B cell (primary cell): ENCODE measurements at regions of chr13 and their contacts with region 1.

Region 1: GRCh38 chr13:78978381-78978998 is 319.5 kb upstream of the OBI1 start:
- DNase-seq: peak; percentile 55
- ATAC-seq: peak; percentile 81
- H3K4me3 ChIP-seq: no peak overlapping the region
- H3K4me3 Mint-ChIP-seq: no peak overlapping the region
- H3K27ac ChIP-seq: no peak overlapping the region
- H3K27ac Mint-ChIP-seq: no peak overlapping the region
- H3K4me1 ChIP-seq: no peaks in the 10 kb centered on the region
- H3K4me1 Mint-ChIP-seq: peaks cover 3% of the 10 kb centered on the region
- H3K27me3 ChIP-seq: peaks cover 0 to 1% (median 0%) of the 10 kb centered on the region in 4 experiments
- H3K27me3 Mint-ChIP-seq: peaks cover 25% of the 10 kb centered on the region
- CTCF ChIP-seq: peak; percentile 87

Region 2: GRCh38 chr13:78131811-78132210 is 846.7 kb before region 1 on chr13:
- CTCF ChIA-PET with region 1: interaction called, 74 read pairs
- POLR2A ChIA-PET with region 1: no interaction called
- intact Hi-C with region 1: no loop called
- DNase-seq: no peak
- ATAC-seq: no peak
- H3K4me3 ChIP-seq: no peak overlapping the region
- H3K4me3 Mint-ChIP-seq: no peak overlapping the region
- H3K27ac ChIP-seq: no peak overlapping the region
- H3K27ac Mint-ChIP-seq: no peak overlapping the region
- H3K4me1 ChIP-seq: no peaks in the 10 kb centered on the region
- H3K4me1 Mint-ChIP-seq: no peaks in the 10 kb centered on the region
- H3K27me3 ChIP-seq: peaks cover 0 to 6% (median 0%) of the 10 kb centered on the region in 4 experiments
- H3K27me3 Mint-ChIP-seq: peaks cover 13% of the 10 kb centered on the region
- CTCF ChIP-seq: no peak

Region 3: DNA sequence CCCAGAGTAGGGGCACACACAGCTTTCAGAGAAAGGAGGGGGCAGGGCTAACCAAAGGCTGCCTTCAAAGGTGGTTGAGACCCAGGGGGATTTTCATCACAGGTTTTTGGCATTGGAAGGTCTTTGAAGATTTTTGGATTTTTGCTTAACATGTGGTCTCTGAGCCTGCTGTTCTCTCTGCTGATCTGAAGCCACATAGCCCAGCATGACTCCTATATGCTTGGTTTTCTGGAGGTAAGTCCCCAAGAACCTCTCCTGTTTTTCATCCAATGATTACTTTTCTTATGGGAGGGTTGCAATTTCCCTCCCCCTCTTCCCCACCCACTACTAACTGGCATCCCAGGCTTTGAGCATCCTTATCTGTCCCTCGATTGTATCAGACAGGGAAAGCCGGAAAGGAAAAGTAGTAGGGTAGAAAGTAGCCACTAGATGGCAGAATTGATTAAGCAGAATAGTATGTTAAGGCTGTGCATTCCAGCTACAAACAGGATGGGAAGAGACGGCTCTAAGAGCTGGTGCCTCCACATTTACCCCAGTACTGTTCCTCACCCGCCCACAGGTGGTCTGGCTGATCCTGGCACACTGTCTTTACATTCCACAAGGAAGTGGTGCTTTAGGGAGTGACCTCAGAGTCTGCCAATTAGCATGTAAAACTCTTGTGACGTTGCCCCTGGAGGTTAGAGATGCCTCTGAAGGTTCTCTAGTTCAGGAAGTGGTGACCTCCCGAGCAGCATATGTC is 840.9 kb before region 1 on chr13:
- CTCF ChIA-PET with region 1: interaction called, 74 read pairs
- POLR2A ChIA-PET with region 1: no interaction called
- intact Hi-C with region 1: no loop called
- DNase-seq: peak; percentile 65
- ATAC-seq: peak; percentile 71
- H3K4me3 ChIP-seq: peak overlapping the region in 4 of 5 experiments; percentile 23 to 48 (median 33)
- H3K4me3 Mint-ChIP-seq: peak overlapping the region; percentile 83
- H3K27ac ChIP-seq: no peak overlapping the region
- H3K27ac Mint-ChIP-seq: no peak overlapping the region
- H3K4me1 ChIP-seq: peaks cover 7% of the 10 kb centered on the region in 2 donors
- H3K4me1 Mint-ChIP-seq: peaks cover 5% of the 10 kb centered on the region
- H3K27me3 ChIP-seq: no peaks in the 10 kb centered on the region
- H3K27me3 Mint-ChIP-seq: no peaks in the 10 kb centered on the region
- CTCF ChIP-seq: peak; percentile 78

Region 4: DNA sequence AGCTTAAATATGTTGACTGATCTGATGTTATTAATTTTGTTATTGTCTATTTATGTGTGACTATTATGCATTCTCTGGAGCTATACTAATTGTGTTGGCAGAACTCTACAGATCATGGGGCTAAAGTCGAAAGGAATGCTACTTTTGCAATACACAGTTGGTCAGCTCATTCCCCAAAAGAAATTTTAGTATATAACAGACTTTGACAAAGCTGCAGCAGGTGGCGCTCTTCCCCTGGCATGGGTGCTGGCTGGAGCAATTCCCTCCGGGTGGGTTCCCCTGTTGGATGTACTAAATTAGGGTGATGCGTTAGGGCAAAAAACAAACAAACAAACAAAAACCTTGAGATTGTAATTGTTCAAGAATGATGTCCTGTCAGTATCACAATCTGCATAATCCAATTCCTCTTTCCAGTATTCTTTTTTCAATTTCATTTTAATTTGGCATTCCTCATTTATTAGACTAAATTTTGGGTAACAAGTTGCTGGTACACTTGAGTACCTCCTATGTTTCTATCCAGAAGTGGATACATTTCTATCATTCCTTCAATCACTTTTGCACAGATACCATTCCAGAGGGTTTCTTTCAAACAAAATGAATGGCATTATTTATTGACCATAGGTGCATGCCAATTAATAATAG is 737.1 kb before region 1 on chr13:
- CTCF ChIA-PET with region 1: interaction called, 4 read pairs
- POLR2A ChIA-PET with region 1: no interaction called
- intact Hi-C with region 1: loop called (anchors 2 kb)
- DNase-seq: peak; percentile 6
- ATAC-seq: no peak
- H3K4me3 ChIP-seq: no peak overlapping the region
- H3K4me3 Mint-ChIP-seq: no peak overlapping the region
- H3K27ac ChIP-seq: no peak overlapping the region
- H3K27ac Mint-ChIP-seq: no peak overlapping the region
- H3K4me1 ChIP-seq: no peaks in the 10 kb centered on the region
- H3K4me1 Mint-ChIP-seq: no peaks in the 10 kb centered on the region
- H3K27me3 ChIP-seq: no peaks in the 10 kb centered on the region
- H3K27me3 Mint-ChIP-seq: no peaks in the 10 kb centered on the region
- CTCF ChIP-seq: peak; percentile 39

Region 5: GRCh38 chr13:79070343-79070974 is 92.0 kb after region 1 on chr13:
- CTCF ChIA-PET with region 1: no interaction called
- POLR2A ChIA-PET with region 1: no interaction called
- intact Hi-C with region 1: no loop called
- DNase-seq: peak; percentile 20
- ATAC-seq: no peak
- H3K4me3 ChIP-seq: no peak overlapping the region
- H3K4me3 Mint-ChIP-seq: peak overlapping the region; percentile 14
- H3K27ac ChIP-seq: no peak overlapping the region
- H3K27ac Mint-ChIP-seq: no peak overlapping the region
- H3K4me1 ChIP-seq: peaks cover 13% of the 10 kb centered on the region in 2 donors
- H3K4me1 Mint-ChIP-seq: peaks cover 19% of the 10 kb centered on the region
- H3K27me3 ChIP-seq: no peaks in the 10 kb centered on the region
- H3K27me3 Mint-ChIP-seq: no peaks in the 10 kb centered on the region
- CTCF ChIP-seq: no peak

Region 6: DNA sequence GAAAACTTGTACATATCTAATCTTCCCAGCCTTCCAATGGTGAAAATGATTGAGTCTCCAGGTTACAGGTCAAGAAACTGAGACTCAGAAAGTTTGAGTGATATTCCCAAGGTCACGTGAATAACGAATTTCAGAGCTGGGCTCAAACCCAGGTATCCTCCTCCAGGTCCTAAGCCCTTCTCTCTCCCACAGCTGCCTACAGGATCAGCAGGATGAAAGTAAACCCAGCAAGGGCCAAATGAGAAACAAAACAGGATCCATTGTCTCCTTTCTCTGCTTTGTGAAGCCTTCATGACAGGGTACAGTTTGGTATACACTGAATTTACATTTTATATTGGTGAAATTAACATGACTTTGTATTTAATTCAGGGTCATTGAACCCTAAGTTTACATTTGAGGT is 219.4 kb after region 1 on chr13:
- CTCF ChIA-PET with region 1: no interaction called
- POLR2A ChIA-PET with region 1: no interaction called
- intact Hi-C with region 1: no loop called
- DNase-seq: no peak
- ATAC-seq: no peak
- H3K4me3 ChIP-seq: no peak overlapping the region
- H3K4me3 Mint-ChIP-seq: no peak overlapping the region
- H3K27ac ChIP-seq: no peak overlapping the region
- H3K27ac Mint-ChIP-seq: no peak overlapping the region
- H3K4me1 ChIP-seq: peaks cover 35 to 37% of the 10 kb centered on the region in 2 donors
- H3K4me1 Mint-ChIP-seq: peaks cover 36% of the 10 kb centered on the region
- H3K27me3 ChIP-seq: no peaks in the 10 kb centered on the region
- H3K27me3 Mint-ChIP-seq: no peaks in the 10 kb centered on the region
- CTCF ChIP-seq: no peak

Region 7: DNA sequence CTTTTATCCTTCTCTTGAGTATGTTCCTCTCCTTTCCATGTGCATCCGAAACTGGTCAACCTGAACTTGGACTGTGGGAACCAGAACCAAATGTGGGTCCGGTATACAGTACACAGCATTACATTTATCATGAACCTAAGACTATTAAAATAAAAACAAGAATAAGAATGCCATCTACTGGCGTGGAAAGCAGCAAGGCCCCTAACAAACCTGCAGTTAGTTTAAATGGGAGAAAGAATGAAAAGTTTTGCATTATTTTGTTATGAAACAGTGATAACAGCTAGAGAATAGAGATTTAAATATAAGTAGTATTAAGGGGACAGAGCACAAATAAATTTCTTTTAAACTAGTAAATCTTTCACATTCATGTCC is 268.1 kb after region 1 on chr13:
- CTCF ChIA-PET with region 1: interaction called, 9 read pairs
- POLR2A ChIA-PET with region 1: no interaction called
- intact Hi-C with region 1: loop called (anchors 5 kb)
- DNase-seq: peak; percentile 44
- ATAC-seq: no peak
- H3K4me3 ChIP-seq: no peak overlapping the region
- H3K4me3 Mint-ChIP-seq: no peak overlapping the region
- H3K27ac ChIP-seq: no peak overlapping the region
- H3K27ac Mint-ChIP-seq: peak overlapping the region; percentile 37
- H3K4me1 ChIP-seq: peaks cover 0 to 7% of the 10 kb centered on the region in 2 donors
- H3K4me1 Mint-ChIP-seq: peaks cover 11% of the 10 kb centered on the region
- H3K27me3 ChIP-seq: no peaks in the 10 kb centered on the region
- H3K27me3 Mint-ChIP-seq: no peaks in the 10 kb centered on the region
- CTCF ChIP-seq: peak; percentile 42

Region 8: DNA sequence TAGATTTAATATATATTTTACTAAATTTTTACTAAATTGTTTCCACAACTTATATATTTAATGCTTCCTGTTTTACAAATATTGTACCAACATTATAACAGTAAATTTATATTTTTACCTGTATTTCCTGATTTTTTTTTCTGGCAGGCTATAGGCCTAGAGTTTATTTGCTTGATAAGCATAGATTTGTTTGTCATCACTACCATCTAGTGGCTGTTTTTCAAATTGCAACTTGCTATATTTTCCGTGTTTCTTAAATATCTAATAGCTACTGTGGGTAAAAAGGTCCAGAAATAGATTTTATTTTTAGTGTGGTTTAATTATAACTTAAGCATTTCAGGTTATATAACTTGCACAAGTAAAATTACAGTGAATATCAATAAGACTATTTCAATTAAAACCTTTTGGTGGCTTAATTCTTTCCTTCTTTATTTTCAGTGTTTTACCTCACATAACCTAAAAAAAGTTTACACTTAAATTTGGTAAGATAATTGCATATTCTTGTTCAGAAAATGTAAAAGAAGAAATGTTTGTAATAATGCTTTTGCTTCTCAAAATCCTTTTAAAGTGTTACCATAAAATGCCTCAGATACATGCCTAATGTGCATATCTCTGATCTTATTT is 563.0 kb after region 1 on chr13:
- CTCF ChIA-PET with region 1: interaction called, 4 read pairs
- POLR2A ChIA-PET with region 1: no interaction called
- intact Hi-C with region 1: loop called (anchors 5 kb)
- DNase-seq: peak; percentile 72
- ATAC-seq: no peak
- H3K4me3 ChIP-seq: no peak overlapping the region
- H3K4me3 Mint-ChIP-seq: no peak overlapping the region
- H3K27ac ChIP-seq: no peak overlapping the region
- H3K27ac Mint-ChIP-seq: no peak overlapping the region
- H3K4me1 ChIP-seq: no peaks in the 10 kb centered on the region
- H3K4me1 Mint-ChIP-seq: no peaks in the 10 kb centered on the region
- H3K27me3 ChIP-seq: no peaks in the 10 kb centered on the region
- H3K27me3 Mint-ChIP-seq: no peaks in the 10 kb centered on the region
- CTCF ChIP-seq: peak; percentile 99